CD4-positive, alpha-beta T cell (primary cell): ENCODE measurements at regions of chr9 and their contacts with region 1.

Region 1: DNA sequence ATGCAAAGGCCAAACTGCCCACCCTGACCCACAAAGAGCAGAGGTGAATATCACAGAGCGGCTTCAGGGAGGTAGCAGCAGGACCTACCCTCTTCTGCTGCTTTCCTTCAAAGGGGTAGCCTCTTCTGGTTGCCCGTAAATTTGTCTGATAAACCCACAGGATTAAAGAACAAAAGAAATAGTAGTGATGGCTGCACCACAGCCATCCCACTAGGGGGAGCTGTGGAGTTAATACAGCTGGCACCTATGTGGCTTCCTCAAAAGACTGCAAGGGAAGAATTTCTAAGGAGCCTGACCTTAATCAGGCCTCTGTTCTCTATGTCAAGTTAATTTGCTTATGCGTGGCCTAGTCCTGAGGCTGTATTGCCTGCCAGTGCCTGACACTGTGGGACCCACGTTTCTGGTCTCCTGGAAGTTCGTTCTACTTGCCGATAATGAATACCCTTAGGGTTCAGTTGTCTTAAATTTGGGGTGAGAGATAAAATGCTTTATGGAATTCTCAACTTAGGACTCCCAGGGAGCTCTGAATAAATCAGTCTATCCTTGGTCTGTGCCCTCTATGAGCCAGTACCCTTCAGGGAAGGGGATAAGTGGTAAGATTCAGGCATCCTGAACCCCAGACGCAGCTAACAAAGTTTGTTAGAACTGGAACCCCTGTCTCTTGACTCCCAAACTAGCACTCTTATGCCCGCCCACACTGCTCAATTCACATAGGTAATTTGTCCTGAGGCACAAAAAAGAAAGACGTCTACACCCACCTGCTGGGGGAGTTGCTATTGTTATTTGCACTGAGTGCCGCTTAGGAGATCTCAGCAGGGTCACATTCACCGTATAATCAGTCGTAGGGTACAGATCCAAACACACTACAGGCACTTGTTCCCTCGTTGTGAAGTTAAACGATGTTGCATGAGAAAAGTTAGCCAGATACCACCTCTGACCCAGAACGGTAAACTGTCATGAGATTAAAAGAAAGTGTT is 77.1 kb downstream of the SUSD1 start:
- DNase-seq: peak; percentile 47 to 87 (median 56)
- ATAC-seq: peak; percentile 93
- H3K4me3 ChIP-seq: no peak overlapping the region
- H3K4me3 Mint-ChIP-seq: no peak overlapping the region
- H3K27ac ChIP-seq: no peak overlapping the region
- H3K27ac Mint-ChIP-seq: no peak overlapping the region
- H3K4me1 ChIP-seq: peaks cover 19% of the 10 kb centered on the region
- H3K4me1 Mint-ChIP-seq: peaks cover 23% of the 10 kb centered on the region
- H3K27me3 ChIP-seq: no peaks in the 10 kb centered on the region
- H3K27me3 Mint-ChIP-seq: no peaks in the 10 kb centered on the region
- CTCF ChIP-seq: peak; percentile 81

Region 2: GRCh38 chr9:112224401-112225289 is 126.6 kb after region 1 on chr9:
- CTCF ChIA-PET with region 1: no interaction called
- POLR2A ChIA-PET with region 1: no interaction called
- intact Hi-C with region 1: loop called in 1 of 2 experiments (anchors 10 kb)
- DNase-seq: no peak
- ATAC-seq: no peak
- H3K4me3 ChIP-seq: no peak overlapping the region
- H3K4me3 Mint-ChIP-seq: no peak overlapping the region
- H3K27ac ChIP-seq: no peak overlapping the region
- H3K27ac Mint-ChIP-seq: no peak overlapping the region
- H3K4me1 ChIP-seq: no peaks in the 10 kb centered on the region
- H3K4me1 Mint-ChIP-seq: peaks cover 6% of the 10 kb centered on the region
- H3K27me3 ChIP-seq: no peaks in the 10 kb centered on the region
- H3K27me3 Mint-ChIP-seq: no peaks in the 10 kb centered on the region
- CTCF ChIP-seq: no peak

Region 3: DNA sequence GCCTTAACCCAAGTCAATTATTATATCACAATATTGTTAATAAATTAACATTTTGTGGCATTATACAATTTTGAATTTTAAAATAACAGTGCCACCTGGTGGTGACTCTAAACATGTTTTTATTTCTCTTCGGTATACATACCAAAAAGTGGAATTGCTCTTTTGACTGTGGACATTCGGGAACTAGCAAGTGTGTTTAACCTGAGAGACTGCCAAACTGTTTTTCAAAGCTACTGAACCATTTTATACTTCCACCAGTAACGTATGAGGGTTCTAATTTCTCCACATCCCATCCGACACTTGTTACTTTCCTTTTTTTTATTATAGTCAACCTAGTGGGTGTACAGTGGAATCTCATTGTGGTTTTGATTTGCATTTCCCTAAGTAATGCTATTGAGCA is 263.6 kb after region 1 on chr9:
- CTCF ChIA-PET with region 1: interaction called, 12 read pairs
- POLR2A ChIA-PET with region 1: interaction called, 3 read pairs
- intact Hi-C with region 1: loop called (anchors 1 kb)
- DNase-seq: peak in 4 of 14 experiments; percentile 48 to 74 (median 64)
- ATAC-seq: no peak
- H3K4me3 ChIP-seq: no peak overlapping the region
- H3K4me3 Mint-ChIP-seq: no peak overlapping the region
- H3K27ac ChIP-seq: no peak overlapping the region
- H3K27ac Mint-ChIP-seq: no peak overlapping the region
- H3K4me1 ChIP-seq: no peaks in the 10 kb centered on the region
- H3K4me1 Mint-ChIP-seq: peaks cover 4% of the 10 kb centered on the region
- H3K27me3 ChIP-seq: no peaks in the 10 kb centered on the region
- H3K27me3 Mint-ChIP-seq: no peaks in the 10 kb centered on the region
- CTCF ChIP-seq: peak; percentile 86